ENCODE measurements at regions of chr5 and their contacts with region 1.

Region 1: GRCh38 chr5:39283231-39283818 is 64.0 kb upstream of the FYB1 start:
- DNase-seq: peak; percentile 72
- ATAC-seq: peak; percentile 99
- H3K4me3 Mint-ChIP-seq: no peak overlapping the region
- H3K27ac Mint-ChIP-seq: peak overlapping the region; percentile 91
- H3K4me1 Mint-ChIP-seq: peaks cover 45% of the 10 kb centered on the region
- H3K27me3 Mint-ChIP-seq: peaks cover 2% of the 10 kb centered on the region

Region 2: GRCh38 chr5:39005566-39006232 is 277.6 kb before region 1 on chr5:
- CTCF ChIA-PET with region 1: interaction called, 3 read pairs
- POLR2A ChIA-PET with region 1: no interaction called
- intact Hi-C with region 1: loop called (anchors 5 kb)
- DNase-seq: peak; percentile 13
- ATAC-seq: peak; percentile 60
- H3K4me3 Mint-ChIP-seq: no peak overlapping the region
- H3K27ac Mint-ChIP-seq: no peak overlapping the region
- H3K4me1 Mint-ChIP-seq: peaks cover 51% of the 10 kb centered on the region
- H3K27me3 Mint-ChIP-seq: no peaks in the 10 kb centered on the region

Region 3: GRCh38 chr5:39148983-39149534 is 134.3 kb before region 1 on chr5:
- CTCF ChIA-PET with region 1: interaction called, 15 read pairs
- POLR2A ChIA-PET with region 1: no interaction called
- intact Hi-C with region 1: loop called (anchors 1 kb)
- DNase-seq: no peak
- ATAC-seq: no peak
- H3K4me3 Mint-ChIP-seq: no peak overlapping the region
- H3K27ac Mint-ChIP-seq: peak overlapping the region; percentile 85
- H3K4me1 Mint-ChIP-seq: peaks cover 75% of the 10 kb centered on the region
- H3K27me3 Mint-ChIP-seq: no peaks in the 10 kb centered on the region

Region 4: DNA sequence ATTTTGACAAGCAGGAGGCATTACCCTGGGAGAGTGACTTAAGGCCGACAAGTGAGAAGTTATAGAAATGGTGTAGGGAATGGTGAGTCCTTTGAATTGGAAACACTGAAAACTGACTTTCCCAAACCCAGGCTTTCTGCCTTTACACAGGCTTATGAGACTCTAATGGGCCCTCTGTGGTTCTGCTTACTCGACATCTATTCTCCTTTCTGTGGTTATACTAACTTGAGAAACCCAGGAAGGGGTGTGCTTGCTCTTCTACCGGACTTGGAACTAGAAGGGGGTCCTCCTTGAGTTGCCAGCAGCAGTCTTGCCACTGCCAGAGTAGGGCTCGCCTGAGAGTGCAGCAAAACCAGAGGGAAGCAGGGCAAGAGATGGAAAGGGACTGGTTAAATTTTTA is 127.2 kb before region 1 on chr5:
- CTCF ChIA-PET with region 1: interaction called, 12 read pairs
- POLR2A ChIA-PET with region 1: no interaction called
- intact Hi-C with region 1: no loop called
- DNase-seq: no peak
- ATAC-seq: peak; percentile 20
- H3K4me3 Mint-ChIP-seq: peak overlapping the region; percentile 48
- H3K27ac Mint-ChIP-seq: peak overlapping the region; percentile 91
- H3K4me1 Mint-ChIP-seq: peaks cover 85% of the 10 kb centered on the region
- H3K27me3 Mint-ChIP-seq: no peaks in the 10 kb centered on the region

Region 5: GRCh38 chr5:39231705-39232525 is 51.4 kb before region 1 on chr5:
- CTCF ChIA-PET with region 1: interaction called, 24 read pairs
- POLR2A ChIA-PET with region 1: no interaction called
- intact Hi-C with region 1: no loop called
- DNase-seq: peak; percentile 76
- ATAC-seq: peak; percentile 93
- H3K4me3 Mint-ChIP-seq: peak overlapping the region; percentile 59
- H3K27ac Mint-ChIP-seq: peak overlapping the region; percentile 94
- H3K4me1 Mint-ChIP-seq: peaks cover 13% of the 10 kb centered on the region
- H3K27me3 Mint-ChIP-seq: no peaks in the 10 kb centered on the region

Region 6: GRCh38 chr5:39256477-39257235 is 26.7 kb before region 1 on chr5:
- CTCF ChIA-PET with region 1: interaction called, 14 read pairs
- POLR2A ChIA-PET with region 1: no interaction called
- intact Hi-C with region 1: no loop called
- DNase-seq: no peak
- ATAC-seq: peak; percentile 93
- H3K4me3 Mint-ChIP-seq: no peak overlapping the region
- H3K27ac Mint-ChIP-seq: no peak overlapping the region
- H3K4me1 Mint-ChIP-seq: peaks cover 11% of the 10 kb centered on the region
- H3K27me3 Mint-ChIP-seq: no peaks in the 10 kb centered on the region